HAP-1 (cell line): ENCODE measurements at regions of chr17 and their contacts with region 1.

Region 1: DNA sequence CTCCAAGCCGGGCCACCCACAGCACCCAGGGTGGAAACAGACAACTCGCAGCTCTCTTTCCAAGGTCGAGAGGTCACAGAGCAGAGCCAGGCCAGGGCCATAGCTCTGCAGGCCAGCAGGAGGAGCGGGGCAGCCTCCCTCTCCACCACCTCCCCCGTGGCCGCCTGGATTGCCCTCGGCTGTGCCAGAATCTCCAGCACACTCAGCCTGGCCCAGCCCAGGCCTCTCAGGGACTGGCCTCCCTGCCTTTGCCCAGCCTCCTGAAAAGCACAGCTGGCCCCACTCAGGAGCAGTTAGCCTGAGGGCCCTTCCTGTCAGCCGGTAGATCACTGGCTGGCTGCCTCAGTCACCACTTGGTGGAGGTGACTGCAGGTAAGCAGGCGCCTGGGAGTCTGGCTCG is 85.8 kb upstream of the SEC14L1 start:
- DNase-seq: no peak
- H3K4me3 ChIP-seq: no peak overlapping the region
- H3K4me1 ChIP-seq: no peaks in the 10 kb centered on the region
- H3K27me3 ChIP-seq: no peaks in the 10 kb centered on the region

Region 2: DNA sequence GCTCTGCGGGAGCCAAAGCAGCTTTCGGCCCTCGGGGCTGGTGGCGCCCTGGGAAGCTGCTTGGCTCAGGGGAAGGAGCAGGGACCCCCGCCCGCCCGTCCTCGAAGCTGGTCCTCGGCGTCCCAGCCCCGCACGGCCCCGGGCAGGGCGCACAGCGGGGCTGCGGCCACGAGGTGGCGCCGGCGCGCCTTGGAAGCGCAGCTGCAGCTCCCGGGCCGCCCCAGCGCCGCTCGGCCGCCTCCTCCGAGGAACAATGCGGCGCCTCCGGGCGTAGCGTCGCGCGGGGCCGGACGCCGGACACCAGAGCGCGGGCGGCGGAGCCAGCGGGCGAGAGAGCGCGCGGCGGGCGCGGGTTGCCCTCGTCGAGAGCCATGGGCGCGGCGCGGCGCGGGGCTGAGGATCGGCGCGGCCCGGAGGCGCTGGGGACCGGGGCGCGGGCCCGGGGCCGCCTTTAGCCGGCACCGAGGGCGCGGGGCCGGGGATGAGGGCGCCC is 186.7 kb before region 1 on chr17 and contains the start of gene MGAT5B:
- in situ Hi-C with region 1: loop called (anchors 5 kb)
- DNase-seq: peak; percentile 74 to 88
- H3K4me3 ChIP-seq: peak within 1 kb of the TSS; percentile 33
- H3K4me1 ChIP-seq: no peaks in the 10 kb centered on the region; the same call in 1 of the 2 replicates
- H3K27me3 ChIP-seq: no peaks in the 10 kb centered on the region

Region 3: DNA sequence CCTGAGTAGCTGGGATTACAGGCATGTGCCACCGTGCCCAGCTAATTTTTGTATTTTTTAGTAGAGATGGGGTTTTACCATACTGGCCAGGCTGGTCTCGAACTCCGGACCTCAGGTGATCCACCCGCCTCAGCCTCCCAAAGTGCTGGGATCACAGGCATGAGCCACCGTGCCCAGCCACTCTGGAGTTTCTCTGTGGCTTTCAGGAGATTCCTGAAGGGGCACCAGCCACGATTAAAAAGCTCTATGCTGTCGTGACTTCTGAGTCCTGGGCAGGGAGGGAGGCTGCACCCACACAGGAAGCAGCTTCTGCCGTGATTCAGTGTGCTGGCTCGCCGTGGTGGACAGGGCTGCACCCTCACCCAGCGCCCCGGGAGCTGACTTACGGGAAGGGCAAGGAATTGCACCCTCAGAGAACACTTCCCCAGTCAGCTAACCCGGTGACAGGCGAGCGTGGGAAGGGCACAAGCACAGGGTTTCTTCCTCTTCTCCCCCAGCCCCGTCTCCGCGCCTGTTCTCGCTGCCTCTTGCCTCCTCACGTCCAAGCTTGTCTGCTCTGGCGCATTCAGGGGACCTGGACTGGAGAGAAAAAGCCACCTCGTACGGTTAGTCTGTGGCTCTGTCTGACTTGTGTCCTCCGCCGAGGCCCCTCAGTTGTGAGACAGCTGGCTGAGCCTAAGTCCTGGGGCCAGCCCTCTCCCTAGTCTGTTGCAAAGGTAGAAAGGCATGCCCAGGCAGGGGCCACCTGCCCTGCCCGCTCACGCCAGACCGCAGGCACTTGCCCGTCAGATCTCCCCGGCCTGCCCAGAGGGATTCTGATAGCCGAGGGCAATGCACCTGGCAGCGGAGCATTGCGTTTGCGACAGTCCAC is 230.8 kb after region 1 on chr17:
- in situ Hi-C with region 1: no loop called
- DNase-seq: no peak
- H3K4me3 ChIP-seq: no peak overlapping the region
- H3K4me1 ChIP-seq: peaks cover 14% of the 10 kb centered on the region
- H3K27me3 ChIP-seq: no peaks in the 10 kb centered on the region

Region 4: GRCh38 chr17:77420804-77421629 is 366.1 kb after region 1 on chr17:
- in situ Hi-C with region 1: no loop called
- DNase-seq: no peak
- H3K4me3 ChIP-seq: no peak overlapping the region
- H3K4me1 ChIP-seq: no peaks in the 10 kb centered on the region
- H3K27me3 ChIP-seq: no peaks in the 10 kb centered on the region